Caco-2 (cell line): ENCODE measurements at regions of chr6 and their contacts with region 1.

Region 1: DNA sequence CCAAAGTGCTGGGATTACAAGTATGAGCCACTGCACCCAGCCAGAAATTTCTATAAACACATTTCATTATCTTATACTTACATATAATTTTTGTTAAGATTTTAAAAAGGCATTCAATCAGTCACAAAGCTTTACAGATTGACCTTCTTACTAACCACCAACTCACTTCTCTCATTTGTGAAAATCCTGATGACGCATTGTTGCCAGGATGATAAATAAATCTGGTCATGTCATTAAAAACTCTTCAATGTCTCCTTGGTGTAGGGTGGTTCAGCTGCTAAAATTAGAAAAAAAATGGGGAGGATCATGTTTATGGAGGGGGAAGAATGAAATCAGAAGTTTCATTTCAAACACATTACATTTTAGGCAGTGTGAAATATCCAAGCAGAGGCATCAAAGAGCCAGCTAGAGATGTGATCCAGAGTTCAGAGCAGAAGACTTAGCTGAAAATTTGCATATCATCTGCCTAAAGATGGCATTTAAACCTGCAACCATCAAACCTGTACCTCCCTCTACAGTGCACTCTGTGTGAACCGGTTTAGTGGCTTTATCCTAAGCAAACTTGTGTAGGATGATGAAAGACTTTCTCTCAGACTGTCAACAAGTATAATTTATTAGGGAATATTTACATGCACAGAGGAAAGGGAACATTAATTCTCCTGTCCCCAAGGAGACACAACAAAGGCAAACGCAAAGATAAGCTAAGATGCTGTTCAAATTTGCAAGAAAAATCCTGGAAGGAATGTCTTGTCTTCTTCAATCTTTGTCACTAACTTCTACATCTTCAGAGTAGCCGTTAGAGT is 84.9 kb upstream of the PLEKHG1 start:
- DNase-seq: peak in 1 of 2 experiments; percentile 53
- H3K4me3 ChIP-seq: no peak overlapping the region
- H3K4me3 Mint-ChIP-seq: no peak overlapping the region
- H3K27ac Mint-ChIP-seq: peak overlapping the region; percentile 31
- H3K4me1 ChIP-seq: peaks cover 37% of the 10 kb centered on the region
- H3K4me1 Mint-ChIP-seq: peaks cover 39% of the 10 kb centered on the region
- H3K27me3 ChIP-seq: no peaks in the 10 kb centered on the region
- H3K27me3 Mint-ChIP-seq: no peaks in the 10 kb centered on the region
- CTCF ChIP-seq: no peak

Region 2: GRCh38 chr6:150456456-150456855 is 58.3 kb before region 1 on chr6:
- CTCF ChIA-PET with region 1: no interaction called
- POLR2A ChIA-PET with region 1: no interaction called
- intact Hi-C with region 1: loop called (anchors 2 kb)
- DNase-seq: peak; percentile 84 to 93
- H3K4me3 ChIP-seq: 0 out of 2 replicates have a peak overlapping the region, but pooled peaks have one; percentile 8
- H3K4me3 Mint-ChIP-seq: peak overlapping the region; percentile 49
- H3K27ac Mint-ChIP-seq: peak overlapping the region; percentile 49
- H3K4me1 ChIP-seq: peaks cover 26% of the 10 kb centered on the region
- H3K4me1 Mint-ChIP-seq: peaks cover 35% of the 10 kb centered on the region
- H3K27me3 ChIP-seq: no peaks in the 10 kb centered on the region
- H3K27me3 Mint-ChIP-seq: no peaks in the 10 kb centered on the region
- CTCF ChIP-seq: no peak